ENCODE measurements at regions of chr1 and their contacts with region 1.

Region 1: GRCh38 chr1:172429331-172430127 is 9.0 kb downstream of the C1orf105 start:
- DNase-seq: peak in 1 of 6 donors; percentile 33
- ATAC-seq: peak; percentile 38 to 79 (median 72)
- H3K4me3 ChIP-seq: no peak overlapping the region
- H3K27ac ChIP-seq: no peak overlapping the region
- H3K4me1 ChIP-seq: peaks cover 6 to 12% (median 11%) of the 10 kb centered on the region in 3 donors
- H3K27me3 ChIP-seq: no peaks in the 10 kb centered on the region
- CTCF ChIP-seq: peak in 3 of 4 donors; percentile 36 to 61 (median 49)

Region 2: DNA sequence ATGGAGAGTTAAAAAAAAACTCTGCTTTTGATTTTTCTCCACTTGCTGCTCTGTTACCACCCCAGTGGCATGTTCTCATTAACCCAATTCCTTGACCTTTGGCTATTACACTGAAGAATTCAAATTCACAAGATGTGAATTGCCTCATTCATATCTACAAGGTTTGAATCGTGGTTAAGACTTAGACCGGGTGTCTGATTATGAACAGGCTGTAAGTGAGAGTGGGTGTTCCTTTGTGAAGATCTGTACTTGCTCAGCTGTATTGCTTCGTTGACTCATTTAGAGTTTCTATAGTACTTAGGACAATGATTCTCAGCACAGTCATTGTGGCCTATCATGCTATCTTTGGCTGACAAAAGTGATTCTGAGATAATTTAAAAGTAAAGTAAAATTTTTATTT is 551.8 kb before region 1 on chr1:
- intact Hi-C with region 1: no loop called
- DNase-seq: no peak
- ATAC-seq: no peak
- H3K4me3 ChIP-seq: no peak overlapping the region
- H3K27ac ChIP-seq: no peak overlapping the region
- H3K4me1 ChIP-seq: no peaks in the 10 kb centered on the region
- H3K27me3 ChIP-seq: no peaks in the 10 kb centered on the region
- CTCF ChIP-seq: no peak

Region 3: GRCh38 chr1:172002725-172003345 is 426.7 kb before region 1 on chr1:
- intact Hi-C with region 1: loop called in 1 of 3 experiments (anchors 10 kb)
- DNase-seq: peak in 1 of 6 donors; percentile 18
- ATAC-seq: peak in 3 of 4 donors; percentile 50 to 62 (median 58)
- H3K4me3 ChIP-seq: no peak overlapping the region
- H3K27ac ChIP-seq: no peak overlapping the region
- H3K4me1 ChIP-seq: peaks cover 0 to 3% (median 0%) of the 10 kb centered on the region in 3 donors
- H3K27me3 ChIP-seq: no peaks in the 10 kb centered on the region
- CTCF ChIP-seq: peak in 3 of 4 donors; percentile 30 to 46 (median 31)

Region 4: GRCh38 chr1:172487550-172487949 is 58.0 kb after region 1 on chr1:
- intact Hi-C with region 1: no loop called
- DNase-seq: no peak
- ATAC-seq: no peak
- H3K4me3 ChIP-seq: no peak overlapping the region
- H3K27ac ChIP-seq: no peak overlapping the region
- H3K4me1 ChIP-seq: peaks cover 0 to 9% (median 0%) of the 10 kb centered on the region in 3 donors
- H3K27me3 ChIP-seq: no peaks in the 10 kb centered on the region
- CTCF ChIP-seq: no peak

Region 5: GRCh38 chr1:172515927-172516326 is 86.4 kb after region 1 on chr1:
- intact Hi-C with region 1: no loop called
- DNase-seq: no peak
- ATAC-seq: peak in 2 of 4 donors; percentile 49 to 51
- H3K4me3 ChIP-seq: no peak overlapping the region
- H3K27ac ChIP-seq: no peak overlapping the region
- H3K4me1 ChIP-seq: peaks cover 0 to 5% (median 0%) of the 10 kb centered on the region in 3 donors
- H3K27me3 ChIP-seq: no peaks in the 10 kb centered on the region
- CTCF ChIP-seq: no peak

Region 6: DNA sequence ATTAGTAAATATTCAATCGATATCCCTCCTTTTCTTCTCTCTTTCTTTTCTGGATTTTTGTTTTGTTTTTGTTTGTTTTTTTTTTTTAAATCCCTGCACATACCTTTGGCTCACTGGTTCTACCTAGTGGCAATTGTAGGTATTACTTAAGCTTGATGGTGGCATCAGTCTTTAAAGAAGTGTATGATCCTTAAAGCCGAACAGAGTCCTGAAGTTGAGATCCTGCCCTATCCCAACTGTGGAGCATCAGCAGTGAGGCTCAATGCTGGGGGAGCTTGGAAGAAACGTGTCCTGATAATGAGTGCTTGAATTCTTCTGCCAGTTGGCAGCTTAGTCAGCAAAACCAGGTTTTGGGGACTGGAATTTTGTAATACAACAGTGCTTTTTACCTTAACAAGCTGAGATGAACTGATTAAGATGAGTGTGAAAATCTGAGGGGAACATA is 290.2 kb after region 1 on chr1:
- intact Hi-C with region 1: loop called in 1 of 3 experiments (anchors 10 kb)
- DNase-seq: no peak
- ATAC-seq: peak in 3 of 4 donors; percentile 88 to 90 (median 88)
- H3K4me3 ChIP-seq: no peak overlapping the region
- H3K27ac ChIP-seq: no peak overlapping the region
- H3K4me1 ChIP-seq: no peaks in the 10 kb centered on the region
- H3K27me3 ChIP-seq: no peaks in the 10 kb centered on the region
- CTCF ChIP-seq: peak; percentile 37 to 81 (median 62)

Measured in pancreas (tissue), 10 donors.